A549 (cell line): ENCODE measurements at regions of chr5 and their contacts with region 1.

Region 1: DNA sequence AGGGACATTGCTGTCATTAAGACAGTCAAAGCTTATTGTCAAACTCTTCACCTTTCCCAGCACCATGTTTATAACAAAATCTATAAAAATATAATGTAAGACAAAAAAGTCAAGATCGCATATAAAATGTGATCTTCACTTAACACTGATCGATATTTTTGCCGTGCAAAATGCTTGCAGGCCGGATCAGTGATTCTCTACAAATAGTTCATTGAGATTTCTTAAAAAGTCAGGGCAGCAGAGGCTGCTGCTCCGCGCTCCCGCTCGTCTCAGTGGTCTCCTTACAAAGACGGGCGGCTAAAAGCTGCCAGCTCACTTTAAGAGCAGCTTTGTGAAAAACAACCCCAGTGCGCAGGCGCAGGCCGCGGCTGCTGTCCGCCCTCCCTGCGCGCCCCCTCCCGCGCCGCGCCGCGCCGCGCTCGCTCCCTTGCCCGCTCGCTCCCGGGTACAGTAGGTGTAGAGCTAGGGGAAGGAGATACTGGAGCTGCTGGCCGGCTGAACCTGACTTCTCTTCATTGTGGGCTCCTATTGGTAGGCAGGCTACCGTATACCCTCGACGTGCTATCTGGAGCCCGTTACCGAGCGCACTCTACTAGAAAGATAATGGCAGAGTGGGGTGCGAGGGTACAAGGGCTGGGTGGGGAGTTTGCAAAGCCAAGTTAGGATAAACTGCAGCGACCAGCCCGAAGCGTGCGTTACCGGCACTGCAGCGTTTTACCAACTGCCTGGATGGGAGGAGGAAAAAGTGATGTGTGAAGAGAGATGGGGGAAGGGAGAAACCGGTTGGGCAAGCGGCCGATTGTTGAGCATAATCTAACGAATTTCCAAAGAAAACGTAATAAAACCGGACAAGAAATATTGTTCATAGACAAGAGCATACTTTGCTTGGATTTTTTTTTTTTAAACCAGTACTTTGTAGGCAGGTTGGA is at the start of gene ARRDC3:
- DNase-seq: peak; percentile 95 to 97
- ATAC-seq: peak; percentile 80 to 85
- H3K4me3 ChIP-seq: peak within 1 kb of the TSS; percentile 60
- H3K27ac ChIP-seq: peak within 1 kb of the TSS; percentile 91 to 96
- H3K4me1 ChIP-seq: peaks cover 6% of the 10 kb centered on the region; the same call in 2 of the 3 replicates
- CTCF ChIP-seq: no peak
- EP300 ChIP-seq: no peak; a peak in 1 of 5 replicates
- POLR2A ChIP-seq: peak; percentile 97
- RAD21 ChIP-seq: peak; percentile 3 to 27; a peak in 3 of 5 replicates
- polyA plus RNA-seq, gene ARRDC3: 32.4 and 36.3 TPM in 2 replicates

Region 2: DNA sequence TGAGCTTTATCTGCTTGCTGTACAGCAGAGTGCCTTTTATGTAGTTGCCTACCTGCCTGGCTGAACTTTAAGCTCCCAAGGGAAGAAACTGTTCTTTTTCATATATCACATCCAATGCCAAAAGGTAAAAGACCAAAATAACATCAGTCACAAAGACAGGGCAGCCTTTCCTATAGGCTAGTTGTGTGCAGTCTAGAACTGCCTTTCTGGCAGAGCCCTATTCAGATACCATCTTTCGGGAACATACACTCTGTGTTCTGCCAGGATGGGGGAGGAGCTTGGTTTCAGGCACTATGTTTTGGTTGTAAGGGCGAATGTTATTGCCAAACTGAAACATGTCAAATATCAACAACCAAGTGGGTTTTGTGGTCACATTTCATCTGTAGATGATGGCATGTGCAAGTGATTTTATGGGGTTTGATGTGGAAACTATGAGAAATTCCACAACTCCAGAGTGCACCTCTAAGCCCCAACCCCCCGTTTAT is 510.2 kb before region 1 on chr5:
- CTCF ChIA-PET with region 1: interaction called, 166 read pairs
- POLR2A ChIA-PET with region 1: no interaction called
- DNase-seq: no peak
- ATAC-seq: peak in 1 of 2 experiments; percentile 40; a peak in 1 of 6 replicates
- H3K4me3 ChIP-seq: no peak overlapping the region
- H3K27ac ChIP-seq: peak overlapping the region in 1 of 2 experiments; percentile 45; a peak in 3 of 6 replicates
- H3K4me1 ChIP-seq: peaks cover 31% of the 10 kb centered on the region
- CTCF ChIP-seq: no peak
- EP300 ChIP-seq: no peak
- POLR2A ChIP-seq: no peak
- RAD21 ChIP-seq: no peak

Region 3: GRCh38 chr5:91101600-91102379 is 281.5 kb before region 1 on chr5:
- CTCF ChIA-PET with region 1: interaction called, 48 read pairs
- POLR2A ChIA-PET with region 1: interaction called, 8 read pairs
- DNase-seq: peak; percentile 65 to 88
- ATAC-seq: peak; percentile 99
- H3K4me3 ChIP-seq: no peak overlapping the region
- H3K27ac ChIP-seq: peak overlapping the region; percentile 32 to 78
- H3K4me1 ChIP-seq: peaks cover 8% of the 10 kb centered on the region; the same call in 2 of the 3 replicates
- CTCF ChIP-seq: peak; percentile 93
- EP300 ChIP-seq: no peak
- POLR2A ChIP-seq: no peak
- RAD21 ChIP-seq: peak; percentile 97 to 98

Region 4: DNA sequence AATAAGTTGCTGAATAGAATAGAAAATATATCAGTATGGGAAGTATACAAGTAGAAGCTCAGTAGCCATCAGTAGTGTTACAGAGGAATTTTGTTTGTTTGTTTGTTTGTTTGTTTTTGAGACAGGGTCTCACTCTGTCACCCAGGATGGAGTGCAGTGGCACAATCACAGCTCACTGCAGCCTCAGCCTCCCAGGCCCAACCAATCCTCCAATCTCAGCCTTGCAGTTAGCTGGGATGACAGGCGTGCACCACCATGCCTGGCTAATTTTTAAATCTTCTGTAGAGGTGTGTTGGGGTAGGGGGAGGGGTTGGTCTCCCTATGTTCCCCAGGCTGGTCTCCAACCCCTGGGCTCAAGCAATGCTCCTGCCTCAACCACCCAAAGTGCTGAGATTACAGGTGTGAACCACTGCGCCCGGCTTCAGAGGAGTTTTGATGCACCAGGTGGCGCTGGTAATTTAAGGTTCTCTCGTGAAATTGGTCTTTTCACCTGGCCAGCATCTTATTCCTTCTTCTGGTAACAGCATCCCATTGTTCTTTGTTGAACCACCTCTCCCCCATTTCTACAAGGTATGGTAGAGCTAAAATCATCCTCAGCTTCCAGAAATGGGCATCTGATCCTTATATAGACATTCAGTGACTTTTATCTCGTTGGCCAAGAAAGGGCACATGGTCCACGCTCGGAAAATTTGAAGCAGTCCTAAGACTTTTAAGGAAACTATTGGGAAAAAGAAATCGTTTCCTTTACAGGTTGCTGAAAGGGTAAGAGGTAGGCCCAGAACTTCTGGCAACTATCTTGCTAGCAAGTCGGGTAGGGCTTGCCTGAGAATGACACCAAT is 157.2 kb before region 1 on chr5:
- CTCF ChIA-PET with region 1: interaction called, 56 read pairs
- POLR2A ChIA-PET with region 1: interaction called, 4 read pairs
- DNase-seq: peak in 1 of 2 experiments; percentile 59
- ATAC-seq: peak; percentile 64 to 87
- H3K4me3 ChIP-seq: no peak overlapping the region
- H3K27ac ChIP-seq: peak overlapping the region in 1 of 2 experiments; percentile 39; a peak in 2 of 6 replicates
- H3K4me1 ChIP-seq: peaks cover 4% of the 10 kb centered on the region; the same call in 1 of the 3 replicates
- CTCF ChIP-seq: peak; percentile 61
- EP300 ChIP-seq: no peak
- POLR2A ChIP-seq: no peak
- RAD21 ChIP-seq: peak; percentile 88 to 91

Region 5: DNA sequence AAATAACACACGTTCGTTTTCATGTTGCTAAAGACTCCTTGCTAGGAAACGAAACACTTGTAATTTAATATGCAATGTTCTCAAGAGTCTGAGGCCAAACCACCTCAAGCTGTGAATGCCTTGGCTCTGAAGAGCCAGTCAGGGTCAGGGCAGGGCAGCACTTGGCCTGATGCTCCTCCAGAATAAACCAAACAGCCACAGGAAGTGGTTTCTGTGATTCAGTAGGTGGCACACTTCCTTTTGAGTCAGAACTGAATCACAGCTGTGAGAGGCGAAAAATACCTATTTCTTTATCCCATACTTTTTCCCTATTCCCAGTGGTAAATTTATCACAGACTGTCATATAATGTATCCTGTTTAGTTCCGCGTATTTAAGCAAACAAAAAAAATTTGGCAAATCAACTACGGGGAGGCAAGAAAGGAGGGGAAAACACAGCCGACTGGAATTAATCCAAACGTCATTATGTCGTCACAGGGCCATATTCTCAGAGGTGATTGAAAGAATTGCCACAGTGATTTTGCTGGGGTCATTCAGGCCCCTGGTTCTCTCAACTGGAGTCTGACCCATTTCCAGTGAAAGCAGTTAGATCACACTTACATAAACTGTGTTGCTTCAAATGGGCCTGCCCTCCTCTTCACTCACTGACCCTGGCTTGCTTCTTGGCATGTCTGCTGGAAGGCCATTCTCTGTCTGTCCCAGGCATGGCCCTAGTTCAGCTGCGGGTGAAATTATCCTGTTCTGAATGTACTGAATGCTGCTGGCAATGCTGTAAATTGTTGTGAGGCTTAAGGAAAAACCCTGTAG is 71.4 kb before region 1 on chr5:
- CTCF ChIA-PET with region 1: interaction called, 15 read pairs
- POLR2A ChIA-PET with region 1: interaction called, 57 read pairs
- DNase-seq: peak; percentile 86 to 94
- ATAC-seq: peak; percentile 78 to 80
- H3K4me3 ChIP-seq: peak overlapping the region; percentile 41
- H3K27ac ChIP-seq: peak overlapping the region; percentile 91 to 94
- H3K4me1 ChIP-seq: peaks cover 57% of the 10 kb centered on the region
- CTCF ChIP-seq: no peak
- EP300 ChIP-seq: peak; percentile 84 to 91; a peak in 4 of 5 replicates
- POLR2A ChIP-seq: no peak
- RAD21 ChIP-seq: peak; percentile 35 to 65; a peak in 4 of 5 replicates

Region 6: GRCh38 chr5:91419571-91420537 is 36.6 kb after region 1 on chr5:
- CTCF ChIA-PET with region 1: interaction called, 45 read pairs
- POLR2A ChIA-PET with region 1: interaction called, 11 read pairs
- DNase-seq: peak; percentile 26 to 76
- ATAC-seq: peak in 1 of 2 experiments; percentile 77; a peak in 3 of 6 replicates
- H3K4me3 ChIP-seq: no peak overlapping the region
- H3K27ac ChIP-seq: no peak overlapping the region
- H3K4me1 ChIP-seq: peaks cover 24% of the 10 kb centered on the region
- CTCF ChIP-seq: peak; percentile 89
- EP300 ChIP-seq: no peak
- POLR2A ChIP-seq: no peak
- RAD21 ChIP-seq: peak; percentile 87 to 95